ENCODE measurements at regions of chr22 and their contacts with region 1.

Region 1: GRCh38 chr22:28600546-28601143 is 79.0 kb downstream of the TTC28 start:
- DNase-seq: no peak
- H3K4me3 ChIP-seq: no peak overlapping the region
- H3K27ac ChIP-seq: no peak overlapping the region
- H3K4me1 ChIP-seq: no peaks in the 10 kb centered on the region
- H3K27me3 ChIP-seq: no peaks in the 10 kb centered on the region
- CTCF ChIP-seq: peak; percentile 48 to 72 (median 56)
- EP300 ChIP-seq: no peak
- POLR2A ChIP-seq: no peak

Region 2: GRCh38 chr22:28497188-28497587 is 103.5 kb before region 1 on chr22:
- intact Hi-C with region 1: no loop called
- DNase-seq: no peak
- H3K4me3 ChIP-seq: no peak overlapping the region
- H3K27ac ChIP-seq: no peak overlapping the region
- H3K4me1 ChIP-seq: no peaks in the 10 kb centered on the region
- H3K27me3 ChIP-seq: no peaks in the 10 kb centered on the region
- CTCF ChIP-seq: no peak
- EP300 ChIP-seq: no peak
- POLR2A ChIP-seq: no peak

Region 3: GRCh38 chr22:28829358-28830181 is 228.9 kb after region 1 on chr22:
- intact Hi-C with region 1: loop called in 3 of 4 experiments (anchors 5 to 10 kb)
- DNase-seq: peak; percentile 76 to 86 (median 86)
- H3K4me3 ChIP-seq: no peak overlapping the region
- H3K27ac ChIP-seq: no peak overlapping the region
- H3K4me1 ChIP-seq: no peaks in the 10 kb centered on the region
- H3K27me3 ChIP-seq: no peaks in the 10 kb centered on the region
- CTCF ChIP-seq: peak; percentile 82 to 94 (median 93)
- EP300 ChIP-seq: no peak
- POLR2A ChIP-seq: no peak

Measured in ovary (tissue), 10 donors.